AG04449 (cell line): ENCODE measurements at regions of chr4 and their contacts with region 1.

Region 1: DNA sequence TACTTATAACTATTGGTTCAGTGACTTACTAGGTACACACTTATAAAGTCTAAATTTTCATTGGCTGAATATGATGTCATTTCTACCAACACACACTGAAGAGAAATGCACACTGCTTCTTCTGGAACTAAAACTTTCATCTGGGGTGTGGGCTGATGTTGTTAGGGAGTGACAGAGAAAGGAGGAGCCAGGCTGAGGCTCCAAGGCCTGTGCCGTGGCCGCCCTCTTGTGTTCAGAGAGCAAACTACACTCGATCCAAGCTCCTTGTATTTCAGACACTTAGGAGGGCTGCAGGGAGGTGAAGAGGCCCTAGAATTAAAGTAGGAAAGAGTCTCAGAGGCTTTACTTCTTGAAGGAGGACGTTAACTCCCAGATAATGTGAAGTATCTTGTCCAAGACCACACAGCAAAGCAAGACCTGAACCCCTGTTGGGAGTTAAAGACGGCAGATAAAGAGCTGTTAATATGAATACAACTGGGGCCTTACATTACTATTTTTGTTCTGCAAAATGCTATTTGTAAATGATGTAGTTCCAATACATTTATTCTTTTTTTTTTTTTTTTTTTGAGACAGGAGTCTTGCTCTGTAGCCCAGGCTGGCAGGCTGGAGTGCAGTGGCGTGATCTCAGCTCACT is 137.5 kb downstream of the AFAP1 start:
- DNase-seq: no peak
- H3K4me3 ChIP-seq: no peak overlapping the region
- CTCF ChIP-seq: peak; percentile 93

Region 2: DNA sequence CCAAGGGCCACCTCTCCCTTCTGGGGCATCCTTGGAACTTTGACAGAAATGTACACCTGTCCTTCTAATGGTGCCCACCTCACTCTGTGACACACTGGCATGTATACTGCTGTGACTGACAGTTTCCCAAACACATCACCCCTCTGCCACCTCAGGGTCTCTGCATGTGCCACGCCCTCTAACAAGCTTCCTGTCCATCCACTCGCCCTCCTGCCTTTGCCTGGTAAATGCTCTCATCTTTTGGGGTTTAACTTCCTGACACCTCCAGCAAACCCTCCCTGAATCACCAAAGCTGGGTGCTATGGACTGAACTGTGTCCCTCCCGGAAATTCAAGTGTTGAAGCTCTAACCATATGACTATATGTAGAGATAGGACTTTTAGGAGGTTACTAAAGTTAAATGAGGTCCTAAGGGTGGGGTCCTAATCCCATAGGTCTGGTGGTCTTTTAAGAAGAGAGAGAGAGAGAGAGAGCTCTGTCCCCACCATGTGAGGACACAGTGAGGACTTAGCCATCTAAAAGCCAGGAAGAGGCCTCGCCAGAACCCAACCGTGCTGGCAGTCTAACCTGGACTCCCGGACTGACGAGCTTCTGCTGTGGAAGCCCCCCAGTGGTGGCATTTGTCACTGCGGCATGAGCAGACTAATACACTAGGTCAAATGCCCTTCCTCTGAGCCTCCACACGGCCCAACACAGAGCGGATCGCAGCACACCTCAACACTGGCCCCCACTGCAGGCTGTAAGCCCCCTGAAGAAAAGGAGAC is 41.8 kb after region 1 on chr4:
- CTCF ChIA-PET with region 1: interaction called, 28 read pairs
- POLR2A ChIA-PET with region 1: interaction called, 5 read pairs
- DNase-seq: peak; percentile 41
- H3K4me3 ChIP-seq: no peak overlapping the region
- CTCF ChIP-seq: peak; percentile 72

Region 3: GRCh38 chr4:7876201-7876875 is 74.1 kb after region 1 on chr4:
- CTCF ChIA-PET with region 1: interaction called, 14 read pairs
- POLR2A ChIA-PET with region 1: no interaction called
- DNase-seq: no peak
- H3K4me3 ChIP-seq: no peak overlapping the region; the same call in 1 of the 2 replicates
- CTCF ChIP-seq: peak; percentile 61

Region 4: GRCh38 chr4:7939377-7940108 is 137.3 kb after region 1 on chr4 and contains the start of gene AFAP1:
- CTCF ChIA-PET with region 1: interaction called, 33 read pairs
- POLR2A ChIA-PET with region 1: interaction called, 6 read pairs
- DNase-seq: no peak
- H3K4me3 ChIP-seq: peak within 1 kb of the TSS; percentile 78
- CTCF ChIP-seq: no peak